Mammary epithelial cell (primary cell): ENCODE measurements at regions of chr5 and their contacts with region 1.

Region 1: GRCh38 chr5:133111299-133111698 is 59.5 kb downstream of the HSPA4 start:
- DNase-seq: peak; percentile 76
- H3K4me3 ChIP-seq: no peak overlapping the region
- H3K27ac ChIP-seq: no peak overlapping the region
- H3K4me1 ChIP-seq: peaks cover 20% of the 10 kb centered on the region
- H3K27me3 ChIP-seq: no peaks in the 10 kb centered on the region
- CTCF ChIP-seq: peak; percentile 88 to 96

Region 2: GRCh38 chr5:133225671-133226152 is 114.4 kb after region 1 on chr5:
- CTCF ChIA-PET with region 1: no interaction called
- dilution Hi-C with region 1: no loop called
- in situ Hi-C with region 1: no loop called
- intact Hi-C with region 1: loop called (anchors 1 kb)
- DNase-seq: peak; percentile 48
- H3K4me3 ChIP-seq: no peak overlapping the region
- H3K27ac ChIP-seq: peak overlapping the region; percentile 94
- H3K4me1 ChIP-seq: peaks cover 60% of the 10 kb centered on the region
- H3K27me3 ChIP-seq: no peaks in the 10 kb centered on the region
- CTCF ChIP-seq: no peak

Region 3: DNA sequence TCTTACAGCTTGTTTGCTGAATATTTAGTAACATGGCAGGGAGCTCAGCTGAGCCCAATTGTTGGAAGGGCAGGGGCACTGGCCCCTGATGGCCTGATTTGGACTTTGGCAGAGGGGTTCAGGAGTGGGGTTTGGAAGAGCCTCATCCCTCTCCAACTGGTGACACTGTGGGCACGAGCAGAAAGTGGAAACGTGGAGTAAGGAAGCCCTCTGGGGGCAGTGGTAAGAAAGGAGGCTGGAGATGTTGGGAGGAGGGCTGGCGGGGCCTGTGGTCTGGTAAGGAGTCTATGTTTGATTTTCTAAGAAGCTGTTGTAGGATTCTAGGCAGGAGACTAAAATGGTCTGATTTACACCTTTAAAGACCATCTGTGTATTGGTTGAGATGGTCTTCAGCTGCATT is 149.4 kb after region 1 on chr5:
- CTCF ChIA-PET with region 1: interaction called, 4 read pairs
- dilution Hi-C with region 1: no loop called
- in situ Hi-C with region 1: no loop called
- intact Hi-C with region 1: loop called (anchors 1 kb)
- DNase-seq: no peak
- H3K4me3 ChIP-seq: no peak overlapping the region
- H3K27ac ChIP-seq: no peak overlapping the region
- H3K4me1 ChIP-seq: no peaks in the 10 kb centered on the region
- H3K27me3 ChIP-seq: no peaks in the 10 kb centered on the region
- CTCF ChIP-seq: peak in 1 of 2 donors; percentile 17

Region 4: GRCh38 chr5:133316427-133316826 is 205.1 kb after region 1 on chr5:
- CTCF ChIA-PET with region 1: interaction called, 21 read pairs
- dilution Hi-C with region 1: no loop called
- in situ Hi-C with region 1: loop called in 1 of 2 experiments (anchors 25 kb)
- intact Hi-C with region 1: loop called (anchors 1 kb)
- DNase-seq: no peak
- H3K4me3 ChIP-seq: no peak overlapping the region
- H3K27ac ChIP-seq: no peak overlapping the region
- H3K4me1 ChIP-seq: peaks cover 6% of the 10 kb centered on the region
- H3K27me3 ChIP-seq: no peaks in the 10 kb centered on the region
- CTCF ChIP-seq: peak in 1 of 2 donors; percentile 2

Region 5: DNA sequence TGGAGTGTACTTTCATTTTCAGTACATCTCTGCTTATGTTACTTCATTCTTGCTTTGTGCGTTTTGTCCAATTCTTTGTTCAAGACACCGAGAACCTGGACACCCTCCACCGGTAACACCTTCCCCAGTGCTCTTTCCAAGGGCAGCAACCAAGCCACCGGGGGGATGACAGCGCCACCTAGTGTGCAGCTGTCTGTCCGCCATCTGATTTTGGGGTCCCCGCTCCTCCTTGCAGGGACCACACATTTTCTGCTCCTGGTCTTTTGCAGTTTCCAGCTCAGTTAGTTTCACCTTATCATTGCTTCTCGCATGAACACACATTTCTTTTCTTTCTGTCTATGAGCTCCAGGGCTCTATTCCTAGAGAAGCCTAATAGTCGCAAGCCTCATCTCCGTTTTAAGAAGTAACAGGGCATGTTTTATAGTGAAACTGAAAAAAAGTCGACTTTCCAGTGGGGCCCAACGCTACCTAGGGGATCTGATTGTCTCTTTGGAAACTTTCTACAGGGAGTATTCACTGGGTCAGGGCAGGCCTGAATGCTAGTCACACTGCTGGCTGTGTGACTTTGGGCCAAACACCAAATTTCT is 349.0 kb after region 1 on chr5:
- CTCF ChIA-PET with region 1: no interaction called
- dilution Hi-C with region 1: no loop called
- in situ Hi-C with region 1: loop called (anchors 10 kb)
- intact Hi-C with region 1: loop called (anchors 1 kb)
- DNase-seq: peak; percentile 20
- H3K4me3 ChIP-seq: no peak overlapping the region
- H3K27ac ChIP-seq: no peak overlapping the region
- H3K4me1 ChIP-seq: peaks cover 10% of the 10 kb centered on the region
- H3K27me3 ChIP-seq: no peaks in the 10 kb centered on the region
- CTCF ChIP-seq: peak; percentile 82 to 96

Region 6: GRCh38 chr5:133868946-133869518 is 757.7 kb after region 1 on chr5:
- CTCF ChIA-PET with region 1: no interaction called
- dilution Hi-C with region 1: no loop called
- in situ Hi-C with region 1: loop called in 1 of 2 experiments (anchors 25 kb)
- intact Hi-C with region 1: loop called (anchors 2 kb)
- DNase-seq: peak; percentile 39
- H3K4me3 ChIP-seq: no peak overlapping the region
- H3K27ac ChIP-seq: no peak overlapping the region
- H3K4me1 ChIP-seq: no peaks in the 10 kb centered on the region
- H3K27me3 ChIP-seq: no peaks in the 10 kb centered on the region
- CTCF ChIP-seq: peak; percentile 82 to 85